Esophagus squamous epithelium (tissue), 5 donors: ENCODE measurements at regions of chr1 and their contacts with region 1.

Region 1: GRCh38 chr1:73998348-73998959 is 199.5 kb downstream of the LRRIQ3 start:
- DNase-seq: no peak
- H3K4me3 ChIP-seq: no peak overlapping the region
- H3K27ac ChIP-seq: no peak overlapping the region
- H3K4me1 ChIP-seq: no peaks in the 10 kb centered on the region
- H3K27me3 ChIP-seq: peaks cover 0 to 2% (median 0%) of the 10 kb centered on the region in 4 donors
- CTCF ChIP-seq: peak in 1 of 6 experiments; percentile 34
- POLR2A ChIP-seq: no peak

Region 2: DNA sequence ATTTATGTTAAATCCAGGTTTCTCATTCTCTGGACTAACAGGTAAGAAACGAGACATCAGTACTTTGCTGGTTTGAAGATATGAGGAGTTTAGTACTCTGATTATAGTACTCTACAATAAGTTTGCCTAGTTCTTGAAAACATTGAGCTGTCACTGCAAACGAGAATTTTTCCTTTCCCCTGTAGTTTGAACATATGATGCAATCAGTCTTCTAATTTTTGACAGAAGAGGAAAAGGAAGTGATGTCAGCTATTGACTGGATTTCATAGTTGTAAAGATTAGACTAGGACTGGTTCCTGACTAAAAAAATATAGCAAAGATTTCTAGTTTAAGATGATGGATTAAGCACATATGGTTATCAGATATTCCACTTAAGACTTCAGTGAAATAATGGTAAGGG is 262.3 kb before region 1 on chr1:
- intact Hi-C with region 1: no loop called
- DNase-seq: no peak
- H3K4me3 ChIP-seq: no peak overlapping the region
- H3K27ac ChIP-seq: no peak overlapping the region
- H3K4me1 ChIP-seq: no peaks in the 10 kb centered on the region
- H3K27me3 ChIP-seq: no peaks in the 10 kb centered on the region
- CTCF ChIP-seq: no peak
- POLR2A ChIP-seq: no peak

Region 3: DNA sequence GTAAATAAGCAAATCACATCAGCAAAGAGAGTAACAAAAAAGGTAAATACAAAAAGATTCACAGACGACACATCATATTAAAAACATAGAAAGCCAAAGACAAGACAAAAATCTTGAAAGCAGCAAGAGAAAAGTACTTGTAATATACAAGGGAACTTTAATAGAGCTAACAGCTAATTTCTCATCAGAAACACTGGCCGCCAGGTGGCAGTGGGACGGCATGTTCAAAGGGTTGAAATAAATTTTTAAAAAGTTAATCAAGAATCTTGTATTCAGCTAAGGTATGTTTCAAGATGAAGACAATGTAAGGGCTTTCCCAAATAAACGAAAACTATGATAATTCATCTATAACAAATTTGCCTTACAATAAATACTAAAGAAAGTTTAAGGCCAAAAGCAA is 158.5 kb before region 1 on chr1:
- intact Hi-C with region 1: loop called (anchors 10 kb)
- DNase-seq: no peak
- H3K4me3 ChIP-seq: no peak overlapping the region
- H3K27ac ChIP-seq: no peak overlapping the region
- H3K4me1 ChIP-seq: no peaks in the 10 kb centered on the region
- H3K27me3 ChIP-seq: no peaks in the 10 kb centered on the region
- CTCF ChIP-seq: peak in 2 of 6 experiments; percentile 16 to 28
- POLR2A ChIP-seq: no peak

Region 4: DNA sequence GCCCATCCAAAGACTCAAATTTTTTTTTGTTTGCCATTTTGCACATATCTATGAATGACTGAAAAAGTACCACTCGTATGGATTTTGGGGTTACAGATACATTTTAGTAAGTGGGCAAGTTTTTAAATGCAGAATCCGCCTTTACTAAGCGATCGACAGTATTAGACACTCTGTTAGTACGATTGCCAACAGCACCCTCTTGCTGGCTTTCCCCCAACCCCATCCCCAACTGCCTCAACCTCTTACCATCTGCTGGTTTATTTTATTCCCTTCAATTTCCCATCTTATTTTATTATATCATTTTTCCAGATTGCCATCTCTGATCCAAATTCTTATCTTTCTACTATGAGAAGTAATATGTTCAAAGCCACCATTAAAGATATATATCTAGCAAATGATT is 45.3 kb before region 1 on chr1:
- intact Hi-C with region 1: no loop called
- DNase-seq: no peak
- H3K4me3 ChIP-seq: no peak overlapping the region
- H3K27ac ChIP-seq: no peak overlapping the region
- H3K4me1 ChIP-seq: no peaks in the 10 kb centered on the region
- H3K27me3 ChIP-seq: no peaks in the 10 kb centered on the region
- CTCF ChIP-seq: no peak
- POLR2A ChIP-seq: no peak

Region 5: DNA sequence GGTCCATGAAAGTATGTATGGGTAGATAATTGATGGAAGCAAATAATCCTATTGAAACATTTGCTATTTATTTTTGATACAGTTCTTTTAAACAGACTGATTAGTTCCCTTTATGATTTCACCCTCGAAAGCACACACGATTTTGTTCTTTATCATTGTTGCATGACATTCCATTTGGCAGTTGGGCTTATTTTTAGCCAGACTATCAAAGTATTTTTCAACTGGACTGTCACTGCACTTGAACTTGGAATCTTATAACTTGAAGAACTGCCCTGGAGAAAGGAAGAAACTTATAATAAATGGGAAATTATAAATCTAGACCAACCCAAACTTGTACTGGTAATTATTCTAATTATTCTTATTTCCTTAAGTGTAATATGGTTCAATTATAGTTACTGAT is 236.7 kb after region 1 on chr1 and contains the start of gene TNNI3K:
- intact Hi-C with region 1: no loop called
- DNase-seq: no peak
- H3K4me3 ChIP-seq: no peak within 1 kb of the TSS
- H3K27ac ChIP-seq: no peak within 1 kb of the TSS
- H3K4me1 ChIP-seq: no peaks in the 10 kb centered on the region
- H3K27me3 ChIP-seq: no peaks in the 10 kb centered on the region
- CTCF ChIP-seq: no peak
- POLR2A ChIP-seq: no peak
- total RNA-seq, gene TNNI3K: 0.19 TPM in 1 of 4 donors, not detected in the others

Region 6: GRCh38 chr1:74455390-74455789 is 456.9 kb after region 1 on chr1:
- intact Hi-C with region 1: no loop called
- DNase-seq: no peak
- H3K4me3 ChIP-seq: no peak overlapping the region
- H3K27ac ChIP-seq: no peak overlapping the region
- H3K4me1 ChIP-seq: no peaks in the 10 kb centered on the region
- H3K27me3 ChIP-seq: no peaks in the 10 kb centered on the region
- CTCF ChIP-seq: no peak
- POLR2A ChIP-seq: no peak